A673 (cell line): ENCODE measurements at regions of chr2 and their contacts with region 1.

Region 1: DNA sequence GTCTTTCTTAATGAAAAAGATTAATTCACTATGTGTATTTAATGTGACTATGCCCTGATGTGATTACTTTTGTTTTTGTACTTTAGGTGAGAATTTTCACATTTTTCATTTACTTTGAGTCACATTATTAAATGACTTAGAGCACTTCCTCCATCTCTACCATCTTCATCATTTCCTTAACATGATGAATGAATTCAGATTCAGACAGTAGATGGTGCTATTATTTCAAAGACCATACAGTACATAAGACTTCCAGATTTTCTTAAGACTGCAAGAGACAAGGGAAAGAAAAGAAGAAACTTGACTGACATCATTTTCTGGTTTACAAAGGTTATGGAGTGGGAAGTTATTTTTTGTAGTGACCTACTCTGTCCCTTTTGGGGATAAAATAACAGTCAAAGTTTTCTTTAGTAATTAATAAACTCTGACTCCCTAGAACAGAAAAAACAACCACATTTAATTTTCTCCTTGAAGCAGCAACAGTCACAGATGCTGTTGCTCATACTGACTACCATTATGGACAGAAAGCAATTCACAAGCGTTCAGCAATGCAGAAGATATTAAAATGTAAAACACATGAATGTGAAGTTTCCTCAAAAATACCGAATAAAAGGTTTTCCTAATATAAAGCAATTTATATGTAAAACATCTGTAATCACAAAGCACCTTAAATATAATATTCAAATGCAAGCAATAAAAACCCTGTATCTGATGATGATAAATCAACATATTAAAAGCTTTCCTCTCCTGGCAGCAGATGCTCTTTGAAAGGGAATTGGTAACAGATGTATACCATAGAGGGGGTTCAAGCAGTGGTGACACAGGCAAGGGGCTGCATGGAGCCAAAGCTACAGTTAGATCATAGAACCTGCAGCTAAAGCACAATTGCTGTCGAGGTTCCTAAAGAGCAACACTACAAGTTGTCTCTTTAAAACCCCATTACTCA is 1010.9 kb upstream of the NXPH2 start:
- DNase-seq: peak; percentile 83
- H3K4me3 ChIP-seq: no peak overlapping the region
- H3K27ac ChIP-seq: no peak overlapping the region
- H3K4me1 ChIP-seq: peaks cover 19% of the 10 kb centered on the region
- H3K27me3 ChIP-seq: no peaks in the 10 kb centered on the region
- CTCF ChIP-seq: peak; percentile 72

Region 2: GRCh38 chr2:138922973-138923563 is 868.0 kb before region 1 on chr2:
- CTCF ChIA-PET with region 1: no interaction called
- POLR2A ChIA-PET with region 1: no interaction called
- intact Hi-C with region 1: loop called (anchors 10 kb)
- DNase-seq: peak; percentile 64
- H3K4me3 ChIP-seq: no peak overlapping the region
- H3K27ac ChIP-seq: no peak overlapping the region
- H3K4me1 ChIP-seq: peaks cover 18% of the 10 kb centered on the region
- H3K27me3 ChIP-seq: no peaks in the 10 kb centered on the region
- CTCF ChIP-seq: peak; percentile 65

Region 3: DNA sequence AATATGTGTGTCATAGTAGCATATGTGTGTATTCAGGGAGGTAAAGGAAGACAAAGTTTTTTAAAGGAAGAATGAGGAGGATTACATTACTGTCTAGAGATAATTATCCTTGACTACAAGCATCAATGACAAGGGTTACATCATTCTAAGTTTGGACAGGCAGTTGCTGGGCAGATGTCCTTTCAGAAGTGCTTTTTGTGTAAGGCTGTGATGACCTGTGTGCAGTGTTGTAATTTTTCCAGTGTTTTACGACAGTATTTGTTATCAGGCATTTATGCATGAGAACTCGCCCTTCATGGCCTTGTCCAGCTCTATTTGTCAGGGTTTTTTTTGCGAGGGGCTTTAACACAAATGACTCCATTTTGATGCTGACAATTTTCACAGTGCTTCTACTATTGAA is 352.6 kb before region 1 on chr2:
- CTCF ChIA-PET with region 1: no interaction called
- POLR2A ChIA-PET with region 1: no interaction called
- intact Hi-C with region 1: no loop called
- DNase-seq: no peak
- H3K4me3 ChIP-seq: no peak overlapping the region
- H3K27ac ChIP-seq: no peak overlapping the region
- H3K4me1 ChIP-seq: no peaks in the 10 kb centered on the region
- H3K27me3 ChIP-seq: no peaks in the 10 kb centered on the region
- CTCF ChIP-seq: no peak

Region 4: GRCh38 chr2:139478206-139478914 is 312.7 kb before region 1 on chr2:
- CTCF ChIA-PET with region 1: no interaction called
- POLR2A ChIA-PET with region 1: no interaction called
- intact Hi-C with region 1: loop called (anchors 10 kb)
- DNase-seq: peak; percentile 88
- H3K4me3 ChIP-seq: no peak overlapping the region
- H3K27ac ChIP-seq: no peak overlapping the region
- H3K4me1 ChIP-seq: peaks cover 17% of the 10 kb centered on the region
- H3K27me3 ChIP-seq: no peaks in the 10 kb centered on the region
- CTCF ChIP-seq: peak; percentile 61

Region 5: GRCh38 chr2:139492131-139492680 is 298.9 kb before region 1 on chr2:
- CTCF ChIA-PET with region 1: no interaction called
- POLR2A ChIA-PET with region 1: no interaction called
- intact Hi-C with region 1: no loop called
- DNase-seq: no peak
- H3K4me3 ChIP-seq: no peak overlapping the region
- H3K27ac ChIP-seq: no peak overlapping the region
- H3K4me1 ChIP-seq: no peaks in the 10 kb centered on the region
- H3K27me3 ChIP-seq: no peaks in the 10 kb centered on the region
- CTCF ChIP-seq: no peak

Region 6: GRCh38 chr2:139773720-139774277 is 17.3 kb before region 1 on chr2:
- CTCF ChIA-PET with region 1: no interaction called
- POLR2A ChIA-PET with region 1: no interaction called
- intact Hi-C with region 1: no loop called
- DNase-seq: peak; percentile 41
- H3K4me3 ChIP-seq: no peak overlapping the region
- H3K27ac ChIP-seq: no peak overlapping the region
- H3K4me1 ChIP-seq: no peaks in the 10 kb centered on the region
- H3K27me3 ChIP-seq: no peaks in the 10 kb centered on the region
- CTCF ChIP-seq: no peak

Region 7: GRCh38 chr2:140344842-140345241 is 553.8 kb after region 1 on chr2:
- CTCF ChIA-PET with region 1: no interaction called
- POLR2A ChIA-PET with region 1: no interaction called
- intact Hi-C with region 1: loop called (anchors 5 kb)
- DNase-seq: no peak
- H3K4me3 ChIP-seq: no peak overlapping the region
- H3K27ac ChIP-seq: no peak overlapping the region
- H3K4me1 ChIP-seq: peaks cover 10% of the 10 kb centered on the region
- H3K27me3 ChIP-seq: no peaks in the 10 kb centered on the region
- CTCF ChIP-seq: no peak

Region 8: GRCh38 chr2:140863713-140864112 is 1072.6 kb after region 1 on chr2:
- CTCF ChIA-PET with region 1: no interaction called
- POLR2A ChIA-PET with region 1: no interaction called
- intact Hi-C with region 1: loop called (anchors 5 kb)
- DNase-seq: peak; percentile 79
- H3K4me3 ChIP-seq: no peak overlapping the region
- H3K27ac ChIP-seq: no peak overlapping the region
- H3K4me1 ChIP-seq: peaks cover 9% of the 10 kb centered on the region
- H3K27me3 ChIP-seq: no peaks in the 10 kb centered on the region
- CTCF ChIP-seq: peak; percentile 67